GM12878 (cell line): ENCODE measurements at regions of chr9 and their contacts with region 1.

Region 1: GRCh38 chr9:72203205-72203803 is 54.1 kb downstream of the GDA start:
- DNase-seq: no peak
- ATAC-seq: peak; percentile 76
- H3K4me3 ChIP-seq: no peak overlapping the region
- H3K27ac ChIP-seq: no peak overlapping the region
- H3K4me1 ChIP-seq: peaks cover 4% of the 10 kb centered on the region
- H3K27me3 ChIP-seq: no peaks in the 10 kb centered on the region
- CTCF ChIP-seq: peak; percentile 62 to 71 (median 71)
- EP300 ChIP-seq: no peak
- POLR2A ChIP-seq: no peak
- RAD21 ChIP-seq: peak; percentile 51

Region 2: GRCh38 chr9:72154468-72155281 is 48.6 kb before region 1 on chr9:
- CTCF ChIA-PET with region 1: interaction called, 8 read pairs
- POLR2A ChIA-PET with region 1: interaction called, 8 read pairs
- RAD21 ChIA-PET with region 1: interaction called, 33 read pairs
- SMC1A ChIA-PET with region 1: interaction called, 9 read pairs
- in situ Hi-C with region 1: no loop called
- intact Hi-C with region 1: loop called (anchors 2 kb)
- DNase-seq: peak; percentile 60
- ATAC-seq: peak; percentile 94
- H3K4me3 ChIP-seq: no peak overlapping the region
- H3K27ac ChIP-seq: no peak overlapping the region
- H3K4me1 ChIP-seq: no peaks in the 10 kb centered on the region; the same call in 1 of the 2 replicates
- H3K27me3 ChIP-seq: peaks cover 0 to under 1% of the 10 kb centered on the region in 2 experiments; a peak in 2 of 4 replicates
- CTCF ChIP-seq: no peak
- EP300 ChIP-seq: peak in 1 of 2 experiments; percentile 55; a peak in 3 of 4 replicates
- POLR2A ChIP-seq: no peak
- RAD21 ChIP-seq: no peak

Region 3: GRCh38 chr9:72251589-72251988 is 48.3 kb after region 1 on chr9:
- CTCF ChIA-PET with region 1: interaction called, 14 read pairs
- POLR2A ChIA-PET with region 1: no interaction called
- RAD21 ChIA-PET with region 1: interaction called, 5 read pairs
- SMC1A ChIA-PET with region 1: interaction called, 10 read pairs
- in situ Hi-C with region 1: no loop called
- intact Hi-C with region 1: no loop called
- DNase-seq: no peak
- ATAC-seq: no peak
- H3K4me3 ChIP-seq: no peak overlapping the region
- H3K27ac ChIP-seq: no peak overlapping the region
- H3K4me1 ChIP-seq: no peaks in the 10 kb centered on the region
- H3K27me3 ChIP-seq: no peaks in the 10 kb centered on the region
- CTCF ChIP-seq: no peak
- EP300 ChIP-seq: no peak
- POLR2A ChIP-seq: no peak
- RAD21 ChIP-seq: no peak

Region 4: GRCh38 chr9:72364679-72365524 is 161.6 kb after region 1 on chr9 and contains the start of gene ZFAND5:
- CTCF ChIA-PET with region 1: interaction called, 7 read pairs
- POLR2A ChIA-PET with region 1: interaction called, 32 read pairs
- RAD21 ChIA-PET with region 1: interaction called, 18 read pairs
- SMC1A ChIA-PET with region 1: interaction called, 7 read pairs
- in situ Hi-C with region 1: no loop called
- intact Hi-C with region 1: loop called (anchors 10 kb)
- DNase-seq: peak; percentile 57
- ATAC-seq: peak; percentile 88
- H3K4me3 ChIP-seq: peak within 1 kb of the TSS; percentile 91
- H3K27ac ChIP-seq: peak within 1 kb of the TSS; percentile 80
- H3K4me1 ChIP-seq: peaks cover 4% of the 10 kb centered on the region
- H3K27me3 ChIP-seq: no peaks in the 10 kb centered on the region
- CTCF ChIP-seq: peak in 1 of 3 experiments; percentile 27; a peak in 1 of 6 replicates
- EP300 ChIP-seq: peak in 1 of 2 experiments; percentile 44; a peak in 2 of 4 replicates
- POLR2A ChIP-seq: peak; percentile 97
- RAD21 ChIP-seq: peak; percentile 20; the same call in 1 of the 2 replicates
- polyA plus RNA-seq, gene ZFAND5: 22.5 to 32.3 TPM

Region 5: GRCh38 chr9:72592502-72593403 is 389.4 kb after region 1 on chr9:
- CTCF ChIA-PET with region 1: no interaction called
- POLR2A ChIA-PET with region 1: no interaction called
- RAD21 ChIA-PET with region 1: no interaction called
- SMC1A ChIA-PET with region 1: interaction called, 6 read pairs
- in situ Hi-C with region 1: no loop called
- intact Hi-C with region 1: loop called (anchors 5 kb)
- DNase-seq: peak; percentile 23
- ATAC-seq: peak; percentile 94
- H3K4me3 ChIP-seq: no peak overlapping the region
- H3K27ac ChIP-seq: no peak overlapping the region
- H3K4me1 ChIP-seq: no peaks in the 10 kb centered on the region
- H3K27me3 ChIP-seq: no peaks in the 10 kb centered on the region
- CTCF ChIP-seq: peak; percentile 64 to 76 (median 69)
- EP300 ChIP-seq: no peak
- POLR2A ChIP-seq: no peak
- RAD21 ChIP-seq: peak; percentile 86